ENCODE measurements at regions of chr5 and their contacts with region 1.

Region 1: GRCh38 chr5:132490486-132491367 is at the start of gene IRF1:
- DNase-seq: peak; percentile 67
- H3K4me3 ChIP-seq: peak within 1 kb of the TSS; percentile 71 to 95 (median 88)
- H3K27ac ChIP-seq: peak within 1 kb of the TSS; percentile 95 to 99 (median 98)
- H3K4me1 ChIP-seq: peaks cover 54 to 83% (median 63%) of the 10 kb centered on the region in 3 donors
- H3K27me3 ChIP-seq: no peaks in the 10 kb centered on the region
- CTCF ChIP-seq: peak in 1 of 6 experiments; percentile 3
- POLR2A ChIP-seq: peak in 3 of 4 donors; percentile 56 to 97 (median 97)
- total RNA-seq, gene IRF1: 8.3 to 52.9 (median 13.1) TPM

Region 2: DNA sequence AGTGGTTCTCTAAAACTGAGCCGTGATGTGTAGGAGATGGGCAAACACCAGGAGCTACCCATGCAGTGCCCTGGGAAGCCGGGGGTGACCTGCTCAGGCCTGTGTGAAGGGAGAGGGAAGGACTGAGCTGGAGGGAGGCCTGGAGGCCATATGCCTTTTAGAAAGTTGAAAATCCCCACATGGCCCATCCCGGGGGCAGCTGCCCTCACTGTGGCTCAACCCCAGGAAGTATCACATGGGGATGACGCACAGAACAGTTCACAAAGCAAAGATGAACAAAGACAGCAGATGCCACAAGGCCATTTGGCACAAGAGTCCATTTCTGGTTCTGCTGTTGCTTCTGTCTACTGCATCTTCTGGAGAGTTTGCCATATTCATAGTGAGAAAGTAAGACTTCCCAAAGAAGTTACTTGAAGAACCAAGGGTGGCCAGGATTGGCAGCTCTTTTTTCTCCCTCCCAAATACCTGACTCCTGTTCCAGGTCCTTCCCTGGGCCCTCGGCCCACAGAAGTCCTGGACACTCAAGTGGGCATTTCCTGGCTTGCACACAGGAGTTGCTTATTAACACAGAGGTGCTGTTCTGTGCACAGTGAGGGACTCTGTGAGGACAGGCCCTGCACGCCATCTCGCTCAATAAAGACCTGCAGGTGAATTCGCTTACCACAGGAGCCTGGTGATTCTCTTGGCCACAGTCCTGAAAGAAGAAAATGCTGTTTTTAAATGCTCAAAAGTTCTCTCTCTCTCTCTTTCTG is 504.4 kb before region 1 on chr5:
- intact Hi-C with region 1: no loop called
- DNase-seq: no peak
- H3K4me3 ChIP-seq: no peak overlapping the region
- H3K27ac ChIP-seq: no peak overlapping the region
- H3K4me1 ChIP-seq: peaks cover 0 to 25% (median 0%) of the 10 kb centered on the region in 3 donors
- H3K27me3 ChIP-seq: no peaks in the 10 kb centered on the region
- CTCF ChIP-seq: no peak
- POLR2A ChIP-seq: no peak

Region 3: DNA sequence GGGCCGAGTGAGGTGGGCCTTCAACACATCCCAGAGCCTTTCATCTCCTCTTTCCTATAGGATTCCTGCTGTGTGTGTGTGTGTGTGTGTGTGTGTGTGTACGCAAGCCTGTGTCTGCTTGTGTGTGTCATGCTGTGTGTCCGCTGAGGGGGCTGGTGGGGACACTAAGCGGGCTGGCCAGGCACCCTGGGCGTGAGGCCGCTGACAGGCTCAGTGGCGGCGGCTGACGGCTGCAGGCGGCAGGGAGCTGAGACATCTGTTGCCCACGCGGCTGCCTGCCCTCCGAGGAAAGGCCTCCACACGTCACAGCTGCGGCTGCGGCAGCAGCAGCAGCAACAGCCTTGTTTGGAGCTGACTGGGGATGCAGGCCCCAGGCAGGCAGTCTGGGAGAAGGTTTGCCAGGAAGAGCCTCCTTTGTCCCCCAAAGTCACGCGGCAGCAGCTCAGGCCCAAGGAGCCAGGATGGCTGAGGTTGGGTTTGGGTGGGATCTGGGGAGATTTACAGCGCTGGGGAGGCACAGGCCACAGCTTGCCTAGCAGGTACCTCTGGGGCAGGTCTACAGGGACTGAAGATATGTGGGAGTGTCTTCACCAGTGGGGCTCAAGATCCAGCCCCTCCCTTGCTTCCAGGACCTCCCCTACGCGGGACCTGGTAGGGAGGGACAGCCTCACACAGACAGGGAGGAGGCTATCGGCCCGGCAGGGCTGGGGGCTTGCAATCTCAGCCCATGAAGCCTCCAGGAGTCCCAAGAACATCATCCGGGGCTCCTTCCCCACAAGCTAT is 231.5 kb before region 1 on chr5:
- intact Hi-C with region 1: loop called (anchors 10 kb)
- DNase-seq: no peak
- H3K4me3 ChIP-seq: peak overlapping the region; percentile 66 to 87 (median 73)
- H3K27ac ChIP-seq: peak overlapping the region; percentile 88 to 97 (median 94)
- H3K4me1 ChIP-seq: peaks cover 57 to 96% (median 69%) of the 10 kb centered on the region in 3 donors
- H3K27me3 ChIP-seq: peaks cover 0 to 3% (median 0%) of the 10 kb centered on the region in 4 donors
- CTCF ChIP-seq: no peak
- POLR2A ChIP-seq: peak in 2 of 4 donors; percentile 47 to 56

Region 4: DNA sequence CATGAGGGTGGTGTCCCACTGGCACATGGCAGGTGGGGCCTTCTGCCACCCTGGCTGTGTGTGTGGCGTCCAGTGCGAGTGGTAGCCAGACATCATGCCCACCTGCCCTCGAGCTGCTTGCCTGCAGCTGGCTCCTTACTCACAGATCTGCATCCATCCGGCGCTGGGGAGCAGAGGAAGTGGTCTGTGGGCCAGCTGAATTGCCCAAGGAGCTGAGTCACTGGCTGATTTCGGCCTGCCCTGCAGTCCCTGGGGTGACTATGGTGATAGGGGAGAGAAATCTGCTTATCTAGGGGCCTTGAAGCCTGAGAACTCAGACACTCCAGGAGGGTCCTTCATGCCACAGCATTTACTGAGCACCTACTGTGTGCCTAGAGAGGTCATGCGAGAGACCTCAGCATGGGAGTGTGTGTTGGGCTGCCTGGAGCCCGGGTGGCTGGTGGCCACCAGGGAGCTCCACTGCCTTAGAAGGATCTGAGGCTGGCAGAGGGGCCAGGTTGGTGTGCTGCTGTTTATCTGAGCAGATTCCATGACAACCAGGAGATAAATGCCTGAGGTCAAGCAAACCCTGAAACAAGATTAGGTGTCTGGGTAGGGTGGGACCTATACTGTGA is 64.1 kb before region 1 on chr5:
- intact Hi-C with region 1: loop called (anchors 5 kb)
- DNase-seq: peak; percentile 59
- H3K4me3 ChIP-seq: peak overlapping the region in 1 of 4 donors; percentile 16
- H3K27ac ChIP-seq: peak overlapping the region; percentile 69 to 88 (median 79)
- H3K4me1 ChIP-seq: peaks cover 69 to 98% (median 82%) of the 10 kb centered on the region in 3 donors
- H3K27me3 ChIP-seq: no peaks in the 10 kb centered on the region
- CTCF ChIP-seq: peak in 5 of 6 experiments; percentile 15 to 44 (median 22)
- POLR2A ChIP-seq: no peak

Region 5: GRCh38 chr5:132807163-132807838 is 316.6 kb after region 1 on chr5:
- intact Hi-C with region 1: no loop called
- DNase-seq: no peak
- H3K4me3 ChIP-seq: no peak overlapping the region
- H3K27ac ChIP-seq: no peak overlapping the region
- H3K4me1 ChIP-seq: peaks cover 0 to 14% (median 0%) of the 10 kb centered on the region in 3 donors
- H3K27me3 ChIP-seq: peaks cover 6 to 55% (median 8%) of the 10 kb centered on the region in 4 donors
- CTCF ChIP-seq: peak in 1 of 6 experiments; percentile 26
- POLR2A ChIP-seq: no peak